ENCODE measurements at regions of chr6 and their contacts with region 1.

Region 1: GRCh38 chr6:139375232-139376016 is 976 bp upstream of the CITED2 start:
- DNase-seq: peak; percentile 96
- H3K4me3 ChIP-seq: peak overlapping the region; percentile 72 to 84
- H3K27ac ChIP-seq: peak overlapping the region; percentile 90 to 95
- H3K4me1 ChIP-seq: peaks cover 3% of the 10 kb centered on the region
- H3K27me3 ChIP-seq: no peaks in the 10 kb centered on the region
- CTCF ChIP-seq: no peak
- POLR2A ChIP-seq: peak; percentile 27

Region 2: DNA sequence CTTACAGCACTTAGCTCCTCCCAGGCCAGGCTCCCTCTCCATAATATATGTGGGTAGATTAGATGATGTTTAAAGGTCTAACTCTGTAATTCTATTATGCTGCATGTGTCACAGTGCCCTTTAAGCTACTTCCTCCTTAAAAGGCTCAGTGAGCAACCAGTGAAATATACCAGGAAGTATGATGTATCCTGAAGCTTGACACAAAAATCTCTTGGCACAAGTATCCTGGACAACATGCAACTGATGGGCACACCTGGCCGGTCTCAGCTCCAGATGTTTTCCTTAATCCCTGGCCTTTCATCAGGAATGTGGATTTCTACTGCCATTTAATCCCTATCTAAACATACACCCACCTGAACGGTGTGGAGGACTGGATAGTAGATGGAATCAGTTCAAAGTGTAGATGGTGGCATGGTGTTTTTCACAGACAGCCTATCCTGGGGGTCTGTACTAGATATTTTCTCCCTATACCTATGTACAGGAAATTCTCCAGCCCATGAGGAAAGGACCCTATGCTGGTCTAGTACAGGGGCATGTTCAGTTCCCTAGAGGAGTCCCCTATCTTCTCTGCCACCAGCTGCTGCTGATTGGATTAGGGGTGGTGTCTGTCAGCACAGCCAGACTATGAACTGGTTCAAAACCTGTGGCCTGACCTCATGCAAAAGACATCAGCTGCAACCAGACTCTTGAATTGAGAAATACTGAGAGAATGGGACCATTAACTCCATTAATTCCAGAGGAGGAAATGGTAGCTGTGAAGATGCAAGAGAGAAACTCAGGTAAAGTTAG is 58.4 kb after region 1 on chr6:
- intact Hi-C with region 1: no loop called
- DNase-seq: no peak
- H3K4me3 ChIP-seq: no peak overlapping the region
- H3K27ac ChIP-seq: no peak overlapping the region
- H3K4me1 ChIP-seq: no peaks in the 10 kb centered on the region
- H3K27me3 ChIP-seq: no peaks in the 10 kb centered on the region
- CTCF ChIP-seq: no peak
- POLR2A ChIP-seq: no peak

Region 3: GRCh38 chr6:139540276-139540675 is 164.9 kb after region 1 on chr6:
- intact Hi-C with region 1: loop called (anchors 5 kb)
- DNase-seq: no peak
- H3K4me3 ChIP-seq: no peak overlapping the region
- H3K27ac ChIP-seq: no peak overlapping the region
- H3K4me1 ChIP-seq: peaks cover 2% of the 10 kb centered on the region
- H3K27me3 ChIP-seq: no peaks in the 10 kb centered on the region
- CTCF ChIP-seq: no peak
- POLR2A ChIP-seq: no peak

Region 4: GRCh38 chr6:139764498-139764986 is 389.1 kb after region 1 on chr6:
- intact Hi-C with region 1: loop called (anchors 2 kb)
- DNase-seq: no peak
- H3K4me3 ChIP-seq: no peak overlapping the region
- H3K27ac ChIP-seq: peak overlapping the region; percentile 26 to 38
- H3K4me1 ChIP-seq: no peaks in the 10 kb centered on the region
- H3K27me3 ChIP-seq: no peaks in the 10 kb centered on the region
- CTCF ChIP-seq: no peak
- POLR2A ChIP-seq: no peak

Region 5: GRCh38 chr6:139981768-139982181 is 606.4 kb after region 1 on chr6:
- intact Hi-C with region 1: loop called (anchors 5 kb)
- DNase-seq: peak; percentile 42
- H3K4me3 ChIP-seq: no peak overlapping the region
- H3K27ac ChIP-seq: peak overlapping the region in 1 of 2 donors; percentile 2
- H3K4me1 ChIP-seq: peaks cover 6% of the 10 kb centered on the region
- H3K27me3 ChIP-seq: no peaks in the 10 kb centered on the region
- CTCF ChIP-seq: no peak
- POLR2A ChIP-seq: no peak

Region 6: DNA sequence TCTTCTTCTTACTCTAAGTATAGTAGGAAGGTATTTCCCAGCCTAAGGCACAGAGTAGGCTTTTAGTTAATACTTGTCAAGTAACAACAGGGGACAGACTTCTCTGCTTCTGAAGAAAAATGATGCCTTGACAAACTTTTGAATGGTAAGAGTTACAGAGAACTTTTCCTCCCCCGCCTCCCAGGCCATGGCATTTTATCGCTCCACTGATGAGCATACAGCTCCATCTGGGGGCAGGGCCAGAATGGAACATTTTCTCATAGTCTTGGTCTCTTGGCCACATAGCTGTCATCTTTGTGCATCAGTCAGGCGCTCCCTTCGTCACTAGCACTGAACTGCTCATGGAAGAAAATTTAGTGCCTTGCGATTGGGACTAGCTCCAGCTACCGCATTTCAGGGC is 1065.8 kb after region 1 on chr6:
- intact Hi-C with region 1: loop called (anchors 5 kb)
- DNase-seq: peak; percentile 32
- H3K4me3 ChIP-seq: no peak overlapping the region
- H3K27ac ChIP-seq: no peak overlapping the region
- H3K4me1 ChIP-seq: no peaks in the 10 kb centered on the region
- H3K27me3 ChIP-seq: no peaks in the 10 kb centered on the region
- CTCF ChIP-seq: peak in 3 of 4 experiments; percentile 40 to 54 (median 44)
- POLR2A ChIP-seq: no peak

Region 7: GRCh38 chr6:140921366-140922226 is 1546.2 kb after region 1 on chr6:
- intact Hi-C with region 1: loop called (anchors 5 kb)
- DNase-seq: peak; percentile 31
- H3K4me3 ChIP-seq: no peak overlapping the region
- H3K27ac ChIP-seq: no peak overlapping the region
- H3K4me1 ChIP-seq: no peaks in the 10 kb centered on the region
- H3K27me3 ChIP-seq: no peaks in the 10 kb centered on the region
- CTCF ChIP-seq: peak; percentile 20 to 79 (median 55)
- POLR2A ChIP-seq: no peak

Region 8: DNA sequence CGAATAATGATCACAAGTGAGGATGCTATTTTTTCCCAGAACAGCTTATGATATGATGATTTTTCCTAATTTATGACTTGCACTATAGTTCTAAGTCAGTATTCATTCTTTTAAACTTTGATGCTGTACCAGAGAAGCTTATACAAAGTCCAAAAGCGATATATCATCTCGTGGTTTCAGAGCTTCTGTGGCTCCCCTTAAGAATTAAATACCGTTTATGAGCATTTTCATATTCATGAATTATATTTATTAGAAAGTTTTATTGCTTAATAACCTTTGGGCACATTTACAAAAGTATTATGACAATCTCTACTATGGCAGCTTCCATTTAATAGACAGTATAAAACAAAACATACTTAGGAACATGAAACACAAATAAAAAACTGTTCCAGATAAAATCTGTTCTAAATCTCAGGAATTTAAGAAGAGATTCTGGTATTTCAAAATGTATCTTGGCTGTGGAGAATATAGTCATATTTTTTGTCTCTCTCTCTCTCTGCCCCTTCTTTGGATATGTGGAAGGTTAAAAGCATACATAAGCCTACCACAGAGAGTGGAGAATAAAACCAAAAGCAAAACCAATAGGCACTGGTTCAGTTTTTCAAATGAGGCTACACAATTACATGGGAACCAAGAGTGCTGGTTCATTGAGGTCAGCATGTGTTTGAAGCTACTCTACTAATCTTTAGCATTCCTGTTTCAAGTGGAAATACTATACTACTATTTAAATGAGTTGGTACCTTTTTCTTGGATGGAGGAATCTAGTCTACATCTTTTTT is 1872.8 kb after region 1 on chr6:
- intact Hi-C with region 1: loop called (anchors 10 kb)
- DNase-seq: no peak
- H3K4me3 ChIP-seq: no peak overlapping the region
- H3K27ac ChIP-seq: no peak overlapping the region
- H3K4me1 ChIP-seq: no peaks in the 10 kb centered on the region
- H3K27me3 ChIP-seq: no peaks in the 10 kb centered on the region
- CTCF ChIP-seq: no peak
- POLR2A ChIP-seq: no peak

Measured in prostate gland (tissue), 2 donors.